ENCODE measurements at regions of chr20 and their contacts with region 1.

Region 1: GRCh38 chr20:3753098-3753980 is 14.2 kb downstream of the ADISSP start:
- DNase-seq: peak in 2 of 5 donors; percentile 61 to 64
- ATAC-seq: peak; percentile 55 to 78 (median 61)
- H3K4me3 ChIP-seq: no peak overlapping the region
- H3K27ac ChIP-seq: peak overlapping the region in 6 of 12 donors; percentile 1 to 44 (median 29)
- H3K4me1 ChIP-seq: peaks cover 0 to 59% (median 11%) of the 10 kb centered on the region in 12 donors
- H3K27me3 ChIP-seq: peaks cover 0 to 12% (median 0%) of the 10 kb centered on the region in 9 donors
- CTCF ChIP-seq: peak; percentile 63 to 81 (median 72)
- POLR2A ChIP-seq: no peak

Region 2: DNA sequence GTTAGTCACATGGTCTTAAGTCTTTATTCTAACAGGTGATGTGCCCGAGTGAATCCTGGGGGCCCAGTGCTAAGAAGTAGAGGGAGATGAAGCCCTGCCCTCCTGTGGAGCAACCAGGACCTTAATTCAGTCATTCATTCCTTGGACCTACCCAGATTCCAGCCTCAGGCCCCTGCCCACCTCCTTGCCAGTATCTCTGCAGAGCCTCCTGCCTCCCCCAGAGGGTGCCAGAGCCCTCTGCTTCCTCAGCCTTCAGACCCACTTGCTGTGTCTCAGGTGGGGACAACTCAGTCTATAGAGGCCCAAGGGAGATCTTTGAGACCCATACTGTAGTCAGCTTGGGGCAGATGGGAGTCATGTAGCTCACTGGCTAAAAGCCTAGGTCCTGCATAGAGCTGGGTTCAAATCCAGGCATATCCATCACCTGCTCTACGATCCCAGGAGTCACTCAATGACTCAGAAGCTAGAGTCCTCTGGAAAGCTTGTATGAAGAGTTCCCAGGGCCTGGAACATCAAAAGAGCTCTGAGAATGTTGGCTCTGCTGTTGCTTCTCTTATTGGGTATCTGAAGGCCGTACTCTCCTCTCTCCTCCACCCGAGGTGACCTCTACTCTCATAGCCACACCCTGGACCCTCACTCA is 37.0 kb before region 1 on chr20:
- intact Hi-C with region 1: loop called in 5 of 10 experiments (anchors 5 kb)
- DNase-seq: peak in 4 of 5 donors; percentile 44 to 70 (median 52)
- ATAC-seq: peak; percentile 59 to 74 (median 67)
- H3K4me3 ChIP-seq: no peak overlapping the region
- H3K27ac ChIP-seq: no peak overlapping the region
- H3K4me1 ChIP-seq: peaks cover 0 to 24% (median 0%) of the 10 kb centered on the region in 12 donors
- H3K27me3 ChIP-seq: peaks cover 0 to 4% (median 0%) of the 10 kb centered on the region in 9 donors
- CTCF ChIP-seq: peak; percentile 54 to 84 (median 74)
- POLR2A ChIP-seq: no peak

Region 3: DNA sequence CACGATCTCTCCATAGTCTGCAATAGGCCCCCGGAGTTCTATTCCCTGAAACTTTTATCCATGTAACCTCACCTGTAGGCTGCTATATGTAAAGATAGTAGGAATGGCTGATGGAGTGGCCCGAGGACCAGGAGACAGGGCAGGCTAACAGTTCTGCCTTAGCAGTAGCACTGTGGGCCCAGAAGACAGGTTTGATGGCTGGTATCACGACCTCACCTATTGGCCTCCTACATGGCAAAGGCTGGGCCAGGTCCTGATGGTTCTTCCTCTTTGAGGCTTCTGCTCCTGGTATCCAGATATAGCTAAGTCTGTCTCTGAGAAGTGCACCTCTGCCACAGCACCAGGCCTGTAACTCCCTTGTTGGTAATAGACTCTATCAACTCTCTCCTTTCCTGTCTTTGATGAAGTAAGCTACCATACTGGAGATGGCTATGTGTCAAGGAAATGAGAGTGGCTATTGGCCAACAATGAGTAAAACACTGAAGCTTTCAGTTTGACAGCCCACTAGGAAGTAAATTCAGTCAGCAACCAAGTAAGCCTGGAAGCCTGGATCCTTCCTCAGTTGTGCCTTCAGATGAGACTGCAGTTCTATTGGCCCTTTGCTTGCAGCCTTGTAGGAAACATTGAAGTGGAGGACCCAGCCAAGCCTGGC is 22.2 kb after region 1 on chr20:
- intact Hi-C with region 1: loop called in 1 of 10 experiments (anchors 2 kb)
- DNase-seq: no peak
- ATAC-seq: no peak
- H3K4me3 ChIP-seq: no peak overlapping the region
- H3K27ac ChIP-seq: no peak overlapping the region
- H3K4me1 ChIP-seq: peaks cover 0 to 19% (median 15%) of the 10 kb centered on the region in 12 donors
- H3K27me3 ChIP-seq: peaks cover 0 to 5% (median 0%) of the 10 kb centered on the region in 9 donors
- CTCF ChIP-seq: no peak
- POLR2A ChIP-seq: no peak

Measured in heart left ventricle (tissue), 16 donors.